OCI-LY7 (cell line): ENCODE measurements at regions of chr9 and their contacts with region 1.

Region 1: DNA sequence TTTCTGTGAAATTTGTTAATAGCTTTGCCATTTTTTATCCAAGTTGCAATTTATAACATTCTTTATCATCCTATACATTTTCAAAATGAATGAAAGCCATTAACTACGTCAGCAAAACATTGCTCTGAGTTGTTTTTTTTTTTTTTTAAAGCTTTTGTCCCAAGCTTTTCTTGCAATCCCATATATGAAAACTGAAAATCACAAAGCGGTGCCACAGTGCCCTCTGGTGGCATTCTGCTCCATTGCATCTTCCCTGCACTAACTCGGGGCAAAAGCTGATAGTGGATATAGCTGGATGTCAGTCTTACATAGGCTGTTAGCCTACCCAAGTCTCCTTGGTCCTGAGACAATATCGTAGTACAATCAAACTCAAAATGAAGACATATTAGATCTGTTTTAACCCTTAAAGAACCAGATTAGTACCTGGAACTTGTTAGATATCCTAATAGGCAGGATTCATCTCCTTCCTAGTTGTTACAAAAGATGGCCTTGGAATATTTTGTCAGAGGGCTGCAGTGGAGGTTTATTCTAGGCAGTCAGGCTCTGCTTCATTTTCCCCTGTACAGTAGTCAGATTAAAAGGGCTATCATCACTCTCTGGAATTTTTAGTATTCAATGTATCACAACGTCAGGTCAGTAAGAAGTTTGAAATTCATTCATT is 669.9 kb downstream of the PTPRD start:
- DNase-seq: peak; percentile 57
- H3K4me3 ChIP-seq: no peak overlapping the region
- H3K27ac ChIP-seq: no peak overlapping the region
- H3K4me1 ChIP-seq: no peaks in the 10 kb centered on the region
- CTCF ChIP-seq: peak; percentile 98

Region 2: DNA sequence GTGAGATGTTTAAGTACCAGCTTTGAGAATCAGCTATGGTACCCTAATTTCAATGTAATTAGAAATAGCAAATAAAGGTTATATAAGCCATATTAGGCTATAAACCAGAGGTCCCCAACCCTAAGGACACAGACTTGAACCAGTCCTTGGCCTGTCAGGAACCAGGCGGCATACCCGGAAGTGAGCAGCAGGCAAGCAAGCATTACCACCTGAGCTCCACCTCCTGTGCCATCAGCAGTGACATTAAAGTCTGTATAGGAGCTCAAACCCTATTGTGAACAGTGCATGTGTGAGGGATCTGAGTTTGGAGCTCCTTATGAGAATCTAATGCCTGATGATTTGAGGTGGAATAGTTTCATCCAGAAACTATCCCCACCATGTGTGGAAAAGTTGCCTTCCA is 339.5 kb before region 1 on chr9:
- CTCF ChIA-PET with region 1: interaction called, 6 read pairs
- POLR2A ChIA-PET with region 1: interaction called, 5 read pairs
- intact Hi-C with region 1: loop called (anchors 1 kb)
- DNase-seq: no peak
- H3K4me3 ChIP-seq: no peak overlapping the region
- H3K27ac ChIP-seq: no peak overlapping the region
- H3K4me1 ChIP-seq: peaks cover 16% of the 10 kb centered on the region
- CTCF ChIP-seq: no peak

Region 3: DNA sequence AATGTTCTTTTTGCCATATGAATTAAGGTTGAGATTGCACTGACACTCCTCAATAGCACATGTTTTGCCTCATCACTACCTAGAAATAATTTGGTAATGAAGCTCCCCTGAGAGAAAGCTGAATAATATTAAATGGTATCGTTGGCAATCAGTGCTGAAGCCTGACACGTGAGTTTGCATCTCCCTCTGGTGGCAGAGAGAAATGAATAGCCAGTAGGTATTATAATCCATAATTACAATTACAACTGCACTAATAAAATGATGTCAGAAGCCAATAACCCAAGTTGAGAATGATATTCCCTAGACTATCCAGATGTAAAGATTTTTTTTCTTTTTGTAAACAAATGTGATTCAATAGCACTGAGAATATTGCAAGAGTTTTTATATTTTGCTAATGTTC is 30.4 kb before region 1 on chr9:
- CTCF ChIA-PET with region 1: no interaction called
- POLR2A ChIA-PET with region 1: interaction called, 4 read pairs
- intact Hi-C with region 1: loop called (anchors 2 kb)
- DNase-seq: peak; percentile 46
- H3K4me3 ChIP-seq: no peak overlapping the region
- H3K27ac ChIP-seq: no peak overlapping the region
- H3K4me1 ChIP-seq: no peaks in the 10 kb centered on the region
- CTCF ChIP-seq: peak; percentile 83